Psoas muscle (tissue), 8 donors: ENCODE measurements at regions of chr7 and their contacts with region 1.

Region 1: GRCh38 chr7:100215895-100216294 is 3.9 kb upstream of the PVRIG start:
- DNase-seq: no peak
- ATAC-seq: peak; percentile 15 to 48 (median 44)
- H3K4me3 ChIP-seq: no peak overlapping the region
- H3K27ac ChIP-seq: peak overlapping the region; percentile 50
- H3K4me1 ChIP-seq: peaks cover 8% of the 10 kb centered on the region
- H3K27me3 ChIP-seq: no peaks in the 10 kb centered on the region
- CTCF ChIP-seq: no peak

Region 2: GRCh38 chr7:100158229-100159098 is 57.4 kb before region 1 on chr7 and contains the start of gene TRAPPC14:
- intact Hi-C with region 1: loop called in 1 of 2 experiments (anchors 10 kb)
- DNase-seq: peak; percentile 94 to 95
- ATAC-seq: peak; percentile 84 to 93 (median 88)
- H3K4me3 ChIP-seq: peak within 1 kb of the TSS; percentile 93
- H3K27ac ChIP-seq: peak within 1 kb of the TSS; percentile 86
- H3K4me1 ChIP-seq: peaks cover 12% of the 10 kb centered on the region
- H3K27me3 ChIP-seq: no peaks in the 10 kb centered on the region
- CTCF ChIP-seq: no peak
- total RNA-seq, gene TRAPPC14: 4.1 to 14.2 (median 7.4) TPM